Heart right ventricle (tissue), 16 donors: ENCODE measurements at regions of chr17 and their contacts with region 1.

Region 1: GRCh38 chr17:30477083-30477773 is at the start of gene GOSR1:
- DNase-seq: peak; percentile 90 to 96
- ATAC-seq: peak; percentile 98 to 100 (median 100)
- H3K4me3 ChIP-seq: peak within 1 kb of the TSS; percentile 51 to 92 (median 87)
- H3K27ac ChIP-seq: peak within 1 kb of the TSS; percentile 46 to 98 (median 91)
- H3K4me1 ChIP-seq: peaks cover 0 to 34% (median 26%) of the 10 kb centered on the region in 9 donors
- H3K27me3 ChIP-seq: no peaks in the 10 kb centered on the region
- CTCF ChIP-seq: peak; percentile 70 to 92 (median 79)
- total RNA-seq, gene GOSR1: 29.3 to 43.9 (median 32.8) TPM

Region 2: DNA sequence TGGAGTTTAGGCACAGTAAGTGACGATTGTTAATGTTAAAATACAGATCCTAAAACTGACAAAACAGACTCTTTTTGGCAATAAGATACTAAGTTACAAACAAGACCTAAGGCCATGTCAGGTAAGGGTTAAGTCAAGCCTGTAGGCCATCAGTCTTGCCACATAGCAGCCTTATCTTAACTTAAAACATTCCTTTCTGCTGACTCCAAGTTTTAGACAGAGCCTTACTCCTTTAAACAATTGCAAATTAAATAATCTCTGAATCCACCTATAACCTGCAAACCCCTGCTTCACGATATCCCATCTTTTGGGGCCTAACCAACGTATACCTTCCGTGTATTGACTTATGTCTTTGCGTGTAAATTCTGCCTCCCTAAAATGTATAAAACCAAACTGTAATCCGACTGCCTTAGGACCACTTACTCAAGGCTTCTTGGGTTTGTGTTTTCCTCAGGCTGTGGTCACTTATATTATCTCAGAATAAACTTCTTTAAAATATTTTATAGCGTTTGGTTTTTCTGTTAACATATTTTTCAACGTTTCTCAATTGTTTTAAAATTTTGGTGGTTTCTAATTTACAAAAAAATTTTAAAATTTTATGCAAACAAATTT is 471.4 kb before region 1 on chr17:
- intact Hi-C with region 1: no loop called
- DNase-seq: no peak
- ATAC-seq: no peak
- H3K4me3 ChIP-seq: no peak overlapping the region
- H3K27ac ChIP-seq: no peak overlapping the region
- H3K4me1 ChIP-seq: peaks cover 0 to 7% (median 0%) of the 10 kb centered on the region in 9 donors
- H3K27me3 ChIP-seq: no peaks in the 10 kb centered on the region
- CTCF ChIP-seq: no peak

Region 3: GRCh38 chr17:30378824-30379302 is 98.4 kb before region 1 on chr17 and contains the start of gene CPD:
- intact Hi-C with region 1: loop called in 1 of 10 experiments (anchors 5 kb)
- DNase-seq: peak; percentile 97 to 98
- ATAC-seq: peak; percentile 98 to 99 (median 99)
- H3K4me3 ChIP-seq: peak within 1 kb of the TSS; percentile 74 to 93 (median 90)
- H3K27ac ChIP-seq: peak within 1 kb of the TSS; percentile 65 to 93 (median 86)
- H3K4me1 ChIP-seq: peaks cover 11 to 65% (median 48%) of the 10 kb centered on the region in 9 donors
- H3K27me3 ChIP-seq: no peaks in the 10 kb centered on the region
- CTCF ChIP-seq: peak in 3 of 9 donors; percentile 22 to 29 (median 28)
- total RNA-seq, gene CPD: 20.4 to 44.0 (median 23.0) TPM

Region 4: DNA sequence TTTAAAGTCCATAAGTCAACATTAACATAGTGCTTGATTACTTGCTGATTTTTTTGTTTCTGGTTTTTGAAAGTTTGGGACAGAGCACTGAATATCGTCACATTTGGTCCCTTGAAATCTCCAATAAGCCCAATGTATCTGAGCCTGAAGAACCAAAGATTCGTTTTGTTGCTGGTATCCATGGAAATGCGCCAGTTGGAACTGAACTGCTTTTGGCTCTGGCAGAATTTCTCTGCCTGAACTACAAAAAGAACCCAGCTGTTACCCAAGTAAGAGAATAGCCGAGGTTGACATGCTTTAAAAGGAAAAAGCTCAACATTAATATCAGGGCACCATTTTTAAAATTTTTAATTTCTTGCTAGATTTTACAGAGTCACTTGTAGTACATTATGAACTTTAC is 27.7 kb before region 1 on chr17:
- intact Hi-C with region 1: no loop called
- DNase-seq: peak in 1 of 2 donors; percentile 23
- ATAC-seq: no peak
- H3K4me3 ChIP-seq: no peak overlapping the region
- H3K27ac ChIP-seq: no peak overlapping the region
- H3K4me1 ChIP-seq: peaks cover 0 to 10% (median 0%) of the 10 kb centered on the region in 9 donors
- H3K27me3 ChIP-seq: no peaks in the 10 kb centered on the region
- CTCF ChIP-seq: no peak

Region 5: GRCh38 chr17:30600049-30600829 is 123.0 kb after region 1 on chr17:
- intact Hi-C with region 1: loop called in 4 of 10 experiments (anchors 1 to 10 kb)
- DNase-seq: peak; percentile 83 to 86
- ATAC-seq: peak; percentile 96 to 100 (median 98)
- H3K4me3 ChIP-seq: peak overlapping the region; percentile 66 to 96 (median 88)
- H3K27ac ChIP-seq: peak overlapping the region; percentile 94 to 99 (median 98)
- H3K4me1 ChIP-seq: peaks cover 0 to 26% (median 8%) of the 10 kb centered on the region in 9 donors
- H3K27me3 ChIP-seq: no peaks in the 10 kb centered on the region
- CTCF ChIP-seq: peak in 7 of 9 donors; percentile 32 to 61 (median 56)

Region 6: DNA sequence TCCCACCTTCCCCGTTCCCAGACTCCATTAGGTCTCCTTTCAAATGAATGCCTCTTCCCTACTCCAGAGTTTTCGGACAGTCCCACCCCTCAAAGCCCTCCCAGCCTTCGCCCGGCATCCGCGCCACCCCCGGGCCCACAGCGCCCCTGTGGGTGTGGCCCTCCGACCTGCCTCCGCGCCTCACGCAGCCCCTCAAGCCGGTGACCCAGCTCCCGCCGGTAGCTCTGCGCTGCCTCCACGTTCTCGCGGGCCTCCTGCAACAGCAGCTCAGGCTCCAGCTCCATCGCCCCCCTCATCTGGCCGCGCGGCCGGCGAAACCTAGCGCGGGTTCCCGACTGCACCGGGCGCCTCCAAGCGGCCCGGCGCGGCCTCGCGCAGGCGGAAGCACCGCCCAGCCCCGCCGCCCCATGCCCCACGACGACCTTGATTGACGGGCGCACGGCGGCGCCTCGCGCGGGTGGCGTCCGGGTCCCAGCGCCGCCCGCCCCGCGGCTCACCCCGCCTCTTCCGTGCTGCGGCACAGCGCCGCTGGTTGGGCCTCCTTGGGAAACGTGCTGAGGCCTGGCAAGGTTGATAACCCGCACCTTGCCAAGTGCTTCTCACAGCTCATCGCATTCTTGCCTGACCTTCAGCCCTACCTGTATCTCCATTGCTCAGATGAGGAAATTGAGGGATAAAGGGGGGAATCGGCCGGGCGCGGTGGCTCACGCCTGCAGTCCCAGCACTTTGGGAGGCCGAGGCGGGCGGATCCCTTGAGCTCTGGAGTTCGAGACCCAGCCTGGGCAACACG is 347.3 kb after region 1 on chr17 and contains the start of gene CRLF3:
- intact Hi-C with region 1: loop called in 1 of 10 experiments (anchors 5 kb)
- DNase-seq: peak; percentile 88 to 90
- ATAC-seq: peak; percentile 96 to 99 (median 99)
- H3K4me3 ChIP-seq: peak within 1 kb of the TSS; percentile 42 to 98 (median 94)
- H3K27ac ChIP-seq: peak within 1 kb of the TSS in 9 of 10 donors; percentile 62 to 97 (median 82)
- H3K4me1 ChIP-seq: peaks cover 0 to 61% (median 28%) of the 10 kb centered on the region in 9 donors
- H3K27me3 ChIP-seq: no peaks in the 10 kb centered on the region
- CTCF ChIP-seq: peak; percentile 24 to 80 (median 64)
- total RNA-seq, gene CRLF3: 4.2 to 9.5 (median 5.6) TPM